CD4-positive, alpha-beta T cell (primary cell): ENCODE measurements at regions of chr20 and their contacts with region 1.

Region 1: DNA sequence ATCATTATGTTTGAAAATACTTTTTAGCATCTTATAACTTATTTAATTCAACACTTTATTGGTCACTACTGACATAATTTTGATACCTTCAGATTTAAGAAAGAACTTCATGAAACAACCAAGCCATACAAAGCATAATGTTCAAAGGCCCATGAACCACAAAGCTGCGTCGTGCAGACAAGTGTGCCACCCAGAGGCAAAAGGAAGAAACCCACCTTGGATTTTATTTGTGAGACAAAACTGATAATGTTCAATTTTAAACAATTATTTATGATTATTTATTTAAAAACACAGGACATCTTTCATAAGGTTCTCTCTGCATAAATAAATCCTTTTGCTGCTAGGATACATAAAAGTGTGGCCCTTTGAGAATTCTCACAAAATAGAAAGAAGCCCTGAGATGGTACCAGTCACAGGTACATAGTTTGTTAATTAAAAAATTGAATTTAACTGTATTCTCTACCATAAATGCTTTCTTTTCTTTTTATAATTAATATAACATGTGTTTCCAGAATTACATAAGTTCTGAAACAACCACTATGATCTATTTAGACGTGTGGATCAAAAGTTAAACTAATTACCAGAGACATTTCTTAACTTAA is 143.7 kb downstream of the RALGAPA2 start:
- DNase-seq: peak in 5 of 14 experiments; percentile 6 to 45 (median 33)
- ATAC-seq: no peak
- H3K4me3 ChIP-seq: no peak overlapping the region
- H3K4me3 Mint-ChIP-seq: no peak overlapping the region
- H3K27ac ChIP-seq: no peak overlapping the region
- H3K27ac Mint-ChIP-seq: no peak overlapping the region
- H3K4me1 ChIP-seq: no peaks in the 10 kb centered on the region
- H3K4me1 Mint-ChIP-seq: no peaks in the 10 kb centered on the region
- H3K27me3 ChIP-seq: no peaks in the 10 kb centered on the region
- H3K27me3 Mint-ChIP-seq: no peaks in the 10 kb centered on the region
- CTCF ChIP-seq: peak; percentile 62

Region 2: GRCh38 chr20:19903168-19903811 is 665.4 kb before region 1 on chr20:
- CTCF ChIA-PET with region 1: no interaction called
- POLR2A ChIA-PET with region 1: no interaction called
- intact Hi-C with region 1: no loop called
- DNase-seq: peak in 4 of 14 experiments; percentile 17 to 68 (median 48)
- ATAC-seq: no peak
- H3K4me3 ChIP-seq: no peak overlapping the region
- H3K4me3 Mint-ChIP-seq: no peak overlapping the region
- H3K27ac ChIP-seq: no peak overlapping the region
- H3K27ac Mint-ChIP-seq: no peak overlapping the region
- H3K4me1 ChIP-seq: no peaks in the 10 kb centered on the region
- H3K4me1 Mint-ChIP-seq: no peaks in the 10 kb centered on the region
- H3K27me3 ChIP-seq: no peaks in the 10 kb centered on the region
- H3K27me3 Mint-ChIP-seq: peaks cover 10% of the 10 kb centered on the region
- CTCF ChIP-seq: no peak

Region 3: GRCh38 chr20:20360464-20360863 is 208.2 kb before region 1 on chr20:
- CTCF ChIA-PET with region 1: no interaction called
- POLR2A ChIA-PET with region 1: no interaction called
- intact Hi-C with region 1: loop called in 1 of 2 experiments (anchors 5 kb)
- DNase-seq: peak in 5 of 14 experiments; percentile 3 to 50 (median 39)
- ATAC-seq: no peak
- H3K4me3 ChIP-seq: no peak overlapping the region
- H3K4me3 Mint-ChIP-seq: no peak overlapping the region
- H3K27ac ChIP-seq: no peak overlapping the region
- H3K27ac Mint-ChIP-seq: no peak overlapping the region
- H3K4me1 ChIP-seq: peaks cover 7% of the 10 kb centered on the region
- H3K4me1 Mint-ChIP-seq: peaks cover 21% of the 10 kb centered on the region
- H3K27me3 ChIP-seq: peaks cover 25 to 41% of the 10 kb centered on the region in 2 experiments
- H3K27me3 Mint-ChIP-seq: peaks cover 60% of the 10 kb centered on the region
- CTCF ChIP-seq: peak; percentile 40

Region 4: GRCh38 chr20:20536240-20536933 is 32.3 kb before region 1 on chr20:
- CTCF ChIA-PET with region 1: no interaction called
- POLR2A ChIA-PET with region 1: no interaction called
- intact Hi-C with region 1: no loop called
- DNase-seq: no peak
- ATAC-seq: no peak
- H3K4me3 ChIP-seq: no peak overlapping the region
- H3K4me3 Mint-ChIP-seq: no peak overlapping the region
- H3K27ac ChIP-seq: no peak overlapping the region
- H3K27ac Mint-ChIP-seq: no peak overlapping the region
- H3K4me1 ChIP-seq: no peaks in the 10 kb centered on the region
- H3K4me1 Mint-ChIP-seq: no peaks in the 10 kb centered on the region
- H3K27me3 ChIP-seq: no peaks in the 10 kb centered on the region
- H3K27me3 Mint-ChIP-seq: no peaks in the 10 kb centered on the region
- CTCF ChIP-seq: no peak

Region 5: GRCh38 chr20:20603339-20603990 is 34.8 kb after region 1 on chr20:
- CTCF ChIA-PET with region 1: no interaction called
- POLR2A ChIA-PET with region 1: no interaction called
- intact Hi-C with region 1: no loop called
- DNase-seq: peak in 3 of 14 experiments; percentile 23 to 70 (median 25)
- ATAC-seq: no peak
- H3K4me3 ChIP-seq: no peak overlapping the region
- H3K4me3 Mint-ChIP-seq: no peak overlapping the region
- H3K27ac ChIP-seq: no peak overlapping the region
- H3K27ac Mint-ChIP-seq: no peak overlapping the region
- H3K4me1 ChIP-seq: peaks cover 4% of the 10 kb centered on the region
- H3K4me1 Mint-ChIP-seq: no peaks in the 10 kb centered on the region
- H3K27me3 ChIP-seq: no peaks in the 10 kb centered on the region
- H3K27me3 Mint-ChIP-seq: no peaks in the 10 kb centered on the region
- CTCF ChIP-seq: no peak

Region 6: GRCh38 chr20:20780127-20780824 is 211.6 kb after region 1 on chr20:
- CTCF ChIA-PET with region 1: no interaction called
- POLR2A ChIA-PET with region 1: no interaction called
- intact Hi-C with region 1: no loop called
- DNase-seq: peak in 3 of 14 experiments; percentile 28 to 64 (median 57)
- ATAC-seq: no peak
- H3K4me3 ChIP-seq: no peak overlapping the region
- H3K4me3 Mint-ChIP-seq: no peak overlapping the region
- H3K27ac ChIP-seq: no peak overlapping the region
- H3K27ac Mint-ChIP-seq: no peak overlapping the region
- H3K4me1 ChIP-seq: no peaks in the 10 kb centered on the region
- H3K4me1 Mint-ChIP-seq: no peaks in the 10 kb centered on the region
- H3K27me3 ChIP-seq: peaks cover 0 to 2% of the 10 kb centered on the region in 2 experiments
- H3K27me3 Mint-ChIP-seq: peaks cover 14% of the 10 kb centered on the region
- CTCF ChIP-seq: no peak